Mammary epithelial cell (primary cell): ENCODE measurements at regions of chr20 and their contacts with region 1.

Region 1: DNA sequence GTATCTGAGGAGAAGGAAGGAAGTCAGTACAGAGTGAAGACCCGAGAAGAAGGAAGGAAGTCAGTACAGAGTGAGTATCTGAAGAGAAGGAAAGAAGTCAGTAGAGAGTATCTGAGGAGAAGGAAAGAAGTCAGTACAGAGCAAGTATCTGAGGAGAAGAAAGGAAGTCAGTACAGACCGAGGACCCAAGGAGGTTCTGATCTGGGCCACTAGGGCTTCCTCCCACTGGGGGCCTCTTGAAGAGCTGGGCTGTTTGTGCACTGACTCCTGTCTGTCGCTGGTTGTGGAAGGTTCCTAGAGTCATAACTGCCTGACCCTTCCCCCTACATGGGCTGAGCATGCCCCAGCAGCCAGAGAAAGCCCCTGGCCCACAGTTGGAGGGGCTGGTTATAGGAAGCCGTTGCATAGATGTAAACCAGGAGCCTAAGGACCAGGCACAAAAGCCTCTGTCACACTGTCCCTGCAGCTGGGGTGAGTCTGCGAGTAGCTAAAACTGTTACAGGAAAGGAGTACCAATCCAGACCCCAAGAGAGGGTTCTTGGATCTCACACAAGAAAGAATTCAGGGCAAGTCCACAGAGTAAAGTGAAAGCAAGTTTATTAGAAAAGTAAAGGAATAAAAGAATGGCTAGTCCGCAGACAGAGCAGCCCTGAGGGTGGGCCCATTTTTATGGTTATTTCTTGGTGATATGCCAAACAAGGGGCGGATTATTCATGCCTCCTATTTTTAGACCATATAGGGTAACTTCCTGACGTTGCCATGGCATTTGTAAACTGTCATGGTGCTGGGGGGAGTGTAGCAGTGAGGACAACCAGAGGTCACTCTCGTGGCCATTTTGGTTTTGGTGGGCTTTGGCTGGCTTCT is 395.9 kb downstream of the PREX1 start:
- DNase-seq: no peak
- H3K4me3 ChIP-seq: no peak overlapping the region
- H3K27ac ChIP-seq: no peak overlapping the region
- H3K4me1 ChIP-seq: no peaks in the 10 kb centered on the region
- H3K27me3 ChIP-seq: no peaks in the 10 kb centered on the region
- CTCF ChIP-seq: no peak

Region 2: DNA sequence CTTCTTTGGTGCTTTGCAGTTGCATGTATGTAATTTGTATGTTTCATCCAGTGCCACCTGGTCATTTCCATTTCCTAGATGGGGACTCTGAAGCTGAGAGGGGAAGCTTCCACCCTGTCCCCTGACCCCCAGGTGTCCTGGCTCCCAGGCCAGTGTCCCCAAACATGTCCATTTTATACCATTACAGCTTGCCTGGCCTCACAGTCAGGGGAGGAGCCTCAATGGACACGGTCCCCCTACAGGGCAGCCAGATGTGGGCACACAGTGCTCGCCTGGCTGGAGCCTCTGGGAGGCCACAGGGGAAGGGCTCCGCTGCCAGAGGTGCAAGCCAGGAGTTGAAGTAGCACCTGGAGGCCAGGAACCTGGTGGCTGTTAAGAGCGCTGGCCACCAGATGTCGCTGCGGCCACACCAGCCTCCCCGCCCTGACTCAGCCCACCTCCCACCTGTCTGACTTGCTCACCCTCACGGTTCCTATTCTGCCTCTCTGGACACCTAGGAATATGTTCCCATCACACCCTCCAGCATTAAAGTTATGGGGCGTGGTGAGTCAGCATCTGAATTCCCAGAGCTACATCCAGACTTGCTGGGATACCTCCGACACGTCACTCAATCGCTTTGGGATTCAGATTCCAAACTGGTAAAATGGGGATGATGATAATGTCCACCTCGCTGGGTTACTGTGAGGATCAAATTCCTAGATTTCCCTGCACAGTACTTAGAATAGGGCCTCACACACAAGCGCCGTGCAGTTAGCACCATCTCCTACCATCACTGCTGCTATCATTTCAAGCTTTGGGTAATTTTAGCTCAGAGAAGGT is 754.0 kb before region 1 on chr20:
- CTCF ChIA-PET with region 1: interaction called, 10 read pairs
- dilution Hi-C with region 1: no loop called
- in situ Hi-C with region 1: no loop called
- intact Hi-C with region 1: no loop called
- DNase-seq: peak; percentile 55
- H3K4me3 ChIP-seq: no peak overlapping the region
- H3K27ac ChIP-seq: no peak overlapping the region
- H3K4me1 ChIP-seq: no peaks in the 10 kb centered on the region
- H3K27me3 ChIP-seq: no peaks in the 10 kb centered on the region
- CTCF ChIP-seq: peak; percentile 68 to 79

Region 3: DNA sequence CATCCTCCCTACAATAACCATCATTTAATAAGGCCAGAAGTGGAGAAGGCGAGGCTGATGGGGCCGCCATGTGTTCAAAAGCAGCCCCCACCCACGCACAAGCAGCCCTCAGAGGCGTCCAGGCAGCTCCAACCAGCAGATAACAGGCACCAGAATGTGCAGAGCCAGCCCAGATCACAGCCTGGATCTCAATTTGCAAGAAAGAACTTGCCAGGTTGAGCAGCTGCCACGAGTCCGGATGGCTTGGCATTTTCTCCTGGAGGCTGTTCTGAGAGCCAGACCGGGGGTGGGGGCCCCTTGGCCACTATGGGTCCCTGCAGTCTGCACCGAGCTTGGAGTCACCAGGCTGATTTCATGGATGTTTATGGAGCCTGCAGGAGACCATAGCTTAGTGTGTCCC is 57.8 kb after region 1 on chr20:
- CTCF ChIA-PET with region 1: no interaction called
- dilution Hi-C with region 1: loop called (anchors 10 kb)
- in situ Hi-C with region 1: no loop called
- intact Hi-C with region 1: no loop called
- DNase-seq: peak; percentile 11
- H3K4me3 ChIP-seq: no peak overlapping the region
- H3K27ac ChIP-seq: no peak overlapping the region
- H3K4me1 ChIP-seq: no peaks in the 10 kb centered on the region
- H3K27me3 ChIP-seq: peaks cover 2% of the 10 kb centered on the region
- CTCF ChIP-seq: no peak

Region 4: GRCh38 chr20:48620519-48621254 is 188.8 kb after region 1 on chr20:
- CTCF ChIA-PET with region 1: no interaction called
- dilution Hi-C with region 1: no loop called
- in situ Hi-C with region 1: no loop called
- intact Hi-C with region 1: no loop called
- DNase-seq: peak; percentile 80
- H3K4me3 ChIP-seq: peak overlapping the region; percentile 31 to 40 (median 32)
- H3K27ac ChIP-seq: peak overlapping the region; percentile 62
- H3K4me1 ChIP-seq: peaks cover 23% of the 10 kb centered on the region
- H3K27me3 ChIP-seq: no peaks in the 10 kb centered on the region
- CTCF ChIP-seq: peak; percentile 90 to 98